Head of caudate nucleus (tissue), 42 donors: ENCODE measurements at regions of chr5 and their contacts with region 1.

Region 1: GRCh38 chr5:179060116-179061008 is at the start of gene ZNF354C:
- DNase-seq: peak; percentile 80 to 96 (median 92)

Region 2: DNA sequence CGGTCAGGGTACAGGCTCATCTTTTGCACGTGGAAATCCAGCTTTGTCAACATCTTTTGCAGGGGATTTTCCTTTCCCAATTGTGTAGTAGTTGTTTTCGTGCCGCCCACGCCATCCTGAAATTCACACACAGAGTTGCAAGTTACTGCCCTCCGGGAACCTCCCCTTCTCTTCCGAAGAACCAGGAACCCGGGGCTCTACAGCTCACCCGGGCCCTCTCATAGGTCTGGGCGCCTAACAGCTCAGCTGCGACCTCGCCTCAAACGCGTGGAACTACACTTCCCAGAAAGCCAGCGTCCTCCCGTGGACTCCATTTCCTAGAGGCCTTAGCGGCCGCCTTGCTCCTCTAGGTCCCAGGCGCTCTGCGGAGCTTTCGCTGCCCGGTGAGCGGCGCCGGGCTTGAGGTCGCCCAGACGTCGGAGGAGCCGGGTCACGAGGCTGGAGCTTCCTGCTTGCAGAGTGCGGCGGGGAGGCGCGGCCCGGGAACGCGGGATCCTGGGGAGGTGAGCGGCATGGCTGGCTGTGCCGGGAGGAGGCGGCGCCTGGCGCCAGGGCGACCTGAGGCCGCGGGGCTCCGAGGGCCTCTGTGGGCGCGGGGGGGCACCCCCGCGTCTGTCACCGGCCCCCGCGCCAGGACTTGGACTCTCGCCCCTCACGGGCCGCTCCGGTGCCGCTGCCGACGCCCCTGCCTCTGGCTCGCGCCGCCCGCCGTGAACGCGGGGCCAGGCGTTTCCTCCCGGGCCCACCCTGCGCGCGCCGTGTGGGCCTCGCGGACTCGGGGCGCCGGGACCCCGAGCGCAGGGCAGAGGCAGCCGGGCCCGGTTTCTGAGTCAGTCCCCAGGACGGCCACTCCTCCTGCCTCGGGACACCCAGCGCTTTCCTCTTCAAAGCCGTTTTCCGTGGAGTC is 200.5 kb before region 1 on chr5 and contains the start of gene ZNF354B:
- intact Hi-C with region 1: loop called (anchors 5 kb)
- DNase-seq: peak; percentile 83 to 97 (median 93)

Region 3: GRCh38 chr5:178994580-178995340 is 65.6 kb before region 1 on chr5 and contains the start of gene GRM6:
- intact Hi-C with region 1: no loop called
- DNase-seq: no peak

Region 4: DNA sequence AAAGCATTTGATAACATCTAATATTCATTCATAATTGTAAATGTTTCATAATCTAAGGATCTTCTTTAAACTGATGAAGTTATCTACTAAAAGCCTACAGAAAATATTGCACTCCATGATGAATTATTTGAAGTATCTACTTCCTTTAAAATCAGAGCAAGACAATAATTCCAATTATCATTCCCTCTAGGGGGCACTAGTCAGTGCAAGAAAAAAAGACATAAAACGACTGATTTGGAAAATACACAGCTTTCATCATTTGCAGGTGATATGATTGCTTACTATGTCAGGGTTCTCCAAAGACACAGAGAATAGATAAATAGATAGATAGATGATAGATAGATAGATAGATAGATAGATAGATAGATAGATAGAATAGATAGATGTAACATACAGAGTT is 51.7 kb before region 1 on chr5:
- intact Hi-C with region 1: no loop called
- DNase-seq: no peak

Region 5: DNA sequence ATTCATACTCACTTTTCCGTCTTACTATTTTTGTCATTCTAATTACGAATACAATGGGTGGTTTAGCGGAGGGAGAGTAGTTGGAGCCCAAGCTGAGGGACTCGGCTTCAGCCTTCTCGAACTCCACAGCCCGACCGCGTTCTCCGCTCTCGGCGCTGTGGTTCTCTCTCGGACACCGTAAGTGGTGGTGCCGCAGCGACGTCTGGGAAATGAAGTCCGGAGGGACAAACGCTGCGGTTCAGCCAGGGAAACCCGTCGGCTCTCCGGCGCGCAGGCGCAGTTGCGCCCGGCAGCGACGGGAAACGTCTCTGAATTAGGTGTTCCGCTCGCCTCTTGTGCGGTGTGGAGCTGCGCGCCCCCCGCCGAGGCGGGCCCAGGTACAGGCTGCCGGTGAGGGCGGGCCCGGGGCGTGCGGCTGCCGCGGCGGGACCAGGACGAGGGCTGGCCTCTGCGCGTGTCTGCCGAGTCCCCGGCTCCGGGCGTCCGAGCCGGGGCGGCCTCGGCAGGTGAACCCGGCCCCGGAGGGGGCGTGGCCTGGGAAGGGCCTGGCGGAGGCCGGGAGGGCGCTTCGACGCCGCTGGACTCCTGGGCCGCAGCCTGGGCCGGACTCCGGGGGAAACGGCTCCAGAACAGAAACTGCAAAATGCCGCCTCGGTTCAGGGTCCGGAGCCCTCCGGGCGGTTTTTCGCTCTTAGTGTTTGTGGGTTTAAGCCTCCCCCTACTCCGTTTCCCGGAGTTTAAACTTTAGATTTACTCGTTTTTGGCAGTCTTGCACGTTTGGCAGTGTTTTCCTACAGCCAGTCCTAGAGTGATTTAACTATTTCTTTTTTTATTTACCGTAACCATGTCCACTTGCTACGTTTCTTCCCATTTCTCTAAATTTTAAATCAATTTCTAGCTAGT is 36.6 kb before region 1 on chr5 and contains the start of gene ZNF879:
- intact Hi-C with region 1: loop called (anchors 5 kb)
- DNase-seq: peak; percentile 88 to 99 (median 96)